ENCODE measurements at regions of chr16 and their contacts with region 1.

Region 1: DNA sequence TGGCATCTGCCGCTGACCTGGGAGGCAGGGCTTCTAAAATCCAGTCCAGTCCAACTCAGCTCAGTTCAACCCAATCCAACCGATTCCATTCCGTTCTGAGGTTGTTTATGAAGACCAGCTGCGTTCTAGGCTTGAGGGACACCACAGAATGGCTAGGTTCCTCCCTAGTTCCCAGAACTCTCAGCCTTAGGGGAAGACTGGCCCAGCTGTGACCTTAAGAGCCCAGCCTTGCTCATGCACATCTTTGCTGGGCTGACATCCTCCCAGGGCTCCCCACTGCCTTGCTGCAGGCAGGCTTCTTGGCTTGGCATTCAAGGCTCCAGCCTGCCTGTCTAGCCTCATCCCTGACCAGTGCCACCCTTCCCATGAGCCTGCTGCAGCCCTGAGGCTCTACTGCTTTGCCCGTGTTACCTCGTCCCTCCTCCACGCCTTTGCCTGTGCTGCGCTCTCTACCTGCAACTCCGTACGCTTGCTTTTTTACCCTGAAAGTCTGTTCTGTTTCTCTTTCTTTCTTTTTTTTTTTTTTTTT is 7.9 kb downstream of the SLC12A3 start:
- DNase-seq: no peak
- H3K4me3 ChIP-seq: no peak overlapping the region
- H3K27ac ChIP-seq: no peak overlapping the region
- H3K4me1 ChIP-seq: no peaks in the 10 kb centered on the region
- H3K27me3 ChIP-seq: no peaks in the 10 kb centered on the region
- CTCF ChIP-seq: no peak
- EP300 ChIP-seq: no peak
- POLR2A ChIP-seq: no peak

Region 2: GRCh38 chr16:56911771-56912571 is 39.0 kb after region 1 on chr16:
- intact Hi-C with region 1: no loop called
- DNase-seq: peak in 2 of 5 donors; percentile 38 to 67
- H3K4me3 ChIP-seq: no peak overlapping the region
- H3K27ac ChIP-seq: peak overlapping the region in 1 of 2 donors; percentile 45
- H3K4me1 ChIP-seq: peaks cover 35% of the 10 kb centered on the region
- H3K27me3 ChIP-seq: no peaks in the 10 kb centered on the region
- CTCF ChIP-seq: no peak
- EP300 ChIP-seq: no peak
- POLR2A ChIP-seq: no peak

Region 3: GRCh38 chr16:56939801-56940200 is 66.9 kb after region 1 on chr16:
- intact Hi-C with region 1: loop called in 2 of 4 experiments (anchors 2 to 10 kb)
- DNase-seq: no peak
- H3K4me3 ChIP-seq: no peak overlapping the region
- H3K27ac ChIP-seq: no peak overlapping the region
- H3K4me1 ChIP-seq: peaks cover 5% of the 10 kb centered on the region
- H3K27me3 ChIP-seq: no peaks in the 10 kb centered on the region
- CTCF ChIP-seq: no peak
- EP300 ChIP-seq: no peak
- POLR2A ChIP-seq: no peak